ENCODE measurements at regions of chr7 and their contacts with region 1.

Region 1: DNA sequence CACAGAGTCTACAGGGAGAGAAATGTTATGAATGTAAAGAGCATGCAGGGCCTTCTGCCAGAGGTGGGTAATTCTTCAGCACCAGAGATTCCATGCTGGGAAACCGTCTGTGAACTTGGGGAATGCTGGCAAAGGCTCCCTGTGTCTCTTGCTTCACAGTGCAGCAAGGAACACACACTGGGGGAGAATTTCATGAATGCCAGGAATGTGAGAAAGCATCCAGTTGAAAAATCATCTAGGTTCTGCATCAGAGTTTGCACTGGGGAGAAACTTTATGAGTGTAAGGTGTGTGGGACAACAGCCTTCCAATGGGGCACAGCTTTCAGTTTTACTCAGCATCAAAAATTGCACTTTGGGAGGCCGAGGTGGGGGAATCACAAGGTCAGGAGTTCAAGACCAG is 224.3 kb upstream of the IGFBP3 start:
- DNase-seq: peak; percentile 71
- H3K4me3 ChIP-seq: no peak overlapping the region
- H3K27ac ChIP-seq: no peak overlapping the region
- H3K4me1 ChIP-seq: peaks cover 7% of the 10 kb centered on the region
- H3K27me3 ChIP-seq: no peaks in the 10 kb centered on the region
- CTCF ChIP-seq: no peak

Region 2: GRCh38 chr7:45978010-45978681 is 167.3 kb before region 1 on chr7:
- CTCF ChIA-PET with region 1: no interaction called
- dilution Hi-C with region 1: no loop called
- in situ Hi-C with region 1: no loop called
- intact Hi-C with region 1: loop called (anchors 1 kb)
- DNase-seq: peak; percentile 99
- H3K4me3 ChIP-seq: no peak overlapping the region
- H3K27ac ChIP-seq: peak overlapping the region; percentile 98
- H3K4me1 ChIP-seq: peaks cover 25% of the 10 kb centered on the region
- H3K27me3 ChIP-seq: no peaks in the 10 kb centered on the region
- CTCF ChIP-seq: no peak

Region 3: DNA sequence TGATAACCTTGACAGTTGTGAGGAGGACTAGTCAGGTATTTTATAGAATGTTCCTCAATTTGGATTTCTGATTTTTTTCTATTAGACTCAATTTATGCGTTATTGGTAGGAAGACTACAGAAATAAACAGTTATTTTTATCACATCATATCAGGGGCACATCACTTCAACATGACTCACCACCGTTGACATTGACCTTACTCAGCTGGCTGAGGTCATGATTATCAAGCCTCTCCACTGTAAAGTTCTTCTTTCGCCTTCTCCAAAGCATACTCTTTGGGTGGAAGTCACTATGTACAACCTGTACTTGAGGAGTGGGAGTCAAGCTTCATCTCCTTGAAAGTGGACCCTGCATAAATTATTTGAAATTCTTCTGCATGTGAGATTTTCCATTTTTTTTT is 30.0 kb before region 1 on chr7:
- CTCF ChIA-PET with region 1: no interaction called
- dilution Hi-C with region 1: no loop called
- in situ Hi-C with region 1: no loop called
- intact Hi-C with region 1: no loop called
- DNase-seq: no peak
- H3K4me3 ChIP-seq: no peak overlapping the region
- H3K27ac ChIP-seq: no peak overlapping the region
- H3K4me1 ChIP-seq: no peaks in the 10 kb centered on the region
- H3K27me3 ChIP-seq: no peaks in the 10 kb centered on the region
- CTCF ChIP-seq: no peak

Region 4: GRCh38 chr7:46233585-46234329 is 88.3 kb after region 1 on chr7:
- CTCF ChIA-PET with region 1: no interaction called
- dilution Hi-C with region 1: no loop called
- in situ Hi-C with region 1: no loop called
- intact Hi-C with region 1: no loop called
- DNase-seq: no peak
- H3K4me3 ChIP-seq: no peak overlapping the region
- H3K27ac ChIP-seq: no peak overlapping the region
- H3K4me1 ChIP-seq: no peaks in the 10 kb centered on the region
- H3K27me3 ChIP-seq: peaks cover 2% of the 10 kb centered on the region
- CTCF ChIP-seq: no peak